Activated T-helper 1 cell treated with anti-CD3 and anti-CD28 coated beads, Interleukin-12 subunit alpha, Interleukin-12 subunit beta, Interleukin-2, Interleukin-4 antibody, amounts not matched to agents 30 ng/mL and 10 ng/mL and 1 ng/mL, durations not matched to agents 14 hours and 24 hours and 36 hours (primary cell): ENCODE measurements at regions of chr3 and their contacts with region 1.

Region 1: DNA sequence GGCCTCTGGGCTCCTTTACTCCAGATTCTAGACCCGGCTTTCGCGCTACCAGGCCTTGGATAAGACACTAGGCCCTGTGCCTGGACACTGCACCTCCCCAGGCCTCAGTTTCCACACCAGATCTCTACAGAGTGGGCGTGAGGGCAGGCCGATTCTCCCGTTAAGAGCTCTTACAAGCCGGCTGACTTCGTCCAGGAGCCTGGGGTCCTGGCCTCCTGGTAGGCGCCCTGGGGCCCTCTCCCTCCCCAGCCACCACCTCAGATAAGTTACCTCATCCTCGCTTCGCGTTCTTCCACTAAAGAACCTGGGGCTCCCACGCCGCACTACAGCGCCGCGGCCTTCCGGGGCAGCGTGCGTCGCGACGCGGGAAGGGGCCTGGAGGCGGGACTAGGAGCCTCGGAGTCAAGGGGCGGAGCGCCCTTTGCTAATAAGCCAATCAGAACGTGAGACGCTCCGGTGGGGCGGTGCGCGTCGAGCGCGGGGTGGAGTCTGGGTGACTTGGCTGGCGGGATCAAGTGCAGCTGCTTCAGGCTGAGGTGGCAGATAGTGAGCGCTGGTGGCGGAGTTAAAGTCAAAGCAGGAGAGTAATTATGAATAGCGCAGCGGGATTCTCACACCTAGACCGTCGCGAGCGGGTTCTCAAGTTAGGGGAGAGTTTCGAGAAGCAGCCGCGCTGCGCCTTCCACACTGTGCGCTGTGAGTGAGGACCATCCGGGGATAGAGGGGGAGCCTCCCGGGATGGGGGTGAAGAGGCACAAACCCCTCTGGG is at the starts of genes EAF2 and IQCB1:
- DNase-seq: peak; percentile 95
- H3K4me3 Mint-ChIP-seq: peak within 1 kb of the TSS; percentile 98
- H3K27ac Mint-ChIP-seq: peak within 1 kb of the TSS; percentile 97
- H3K4me1 Mint-ChIP-seq: peaks cover 60% of the 10 kb centered on the region
- H3K27me3 Mint-ChIP-seq: no peaks in the 10 kb centered on the region
- total RNA-seq, gene EAF2: 15.3 and 18.8 TPM in 2 replicates
- total RNA-seq, gene IQCB1: 45.2 and 50.4 TPM in 2 replicates

Region 2: GRCh38 chr3:121660356-121661171 is 174.3 kb before region 1 on chr3 and contains the start of gene HCLS1:
- intact Hi-C with region 1: loop called (anchors 1 kb)
- DNase-seq: peak; percentile 73
- H3K4me3 Mint-ChIP-seq: peak within 1 kb of the TSS; percentile 95
- H3K27ac Mint-ChIP-seq: peak within 1 kb of the TSS; percentile 99
- H3K4me1 Mint-ChIP-seq: peaks cover 57% of the 10 kb centered on the region
- H3K27me3 Mint-ChIP-seq: no peaks in the 10 kb centered on the region
- total RNA-seq, gene HCLS1: 234 and 235 TPM in 2 replicates

Region 3: GRCh38 chr3:121793078-121793477 is 41.8 kb before region 1 on chr3:
- intact Hi-C with region 1: no loop called
- DNase-seq: no peak
- H3K4me3 Mint-ChIP-seq: no peak overlapping the region
- H3K27ac Mint-ChIP-seq: no peak overlapping the region
- H3K4me1 Mint-ChIP-seq: no peaks in the 10 kb centered on the region
- H3K27me3 Mint-ChIP-seq: no peaks in the 10 kb centered on the region

Region 4: DNA sequence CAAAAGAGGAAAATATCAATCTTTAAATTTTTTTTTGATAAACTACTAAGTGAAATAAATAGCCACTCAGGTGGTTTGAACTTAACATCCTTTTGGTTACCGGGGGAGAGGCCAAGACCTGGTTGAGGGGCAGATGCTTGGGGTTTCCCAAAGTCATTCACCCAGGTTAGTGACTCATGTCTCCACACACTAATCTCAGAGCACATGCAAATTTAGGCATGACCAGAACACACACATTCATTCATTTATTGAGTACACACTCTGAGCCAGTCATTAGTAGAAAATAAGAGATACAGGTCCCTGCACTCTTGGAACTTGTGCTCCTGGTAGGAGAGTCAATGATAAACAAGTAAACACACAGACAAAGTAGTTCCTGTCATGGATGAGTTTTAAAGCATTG is 179.9 kb after region 1 on chr3:
- intact Hi-C with region 1: loop called (anchors 1 kb)
- DNase-seq: no peak
- H3K4me3 Mint-ChIP-seq: no peak overlapping the region
- H3K27ac Mint-ChIP-seq: peak overlapping the region; percentile 21
- H3K4me1 Mint-ChIP-seq: peaks cover 40% of the 10 kb centered on the region
- H3K27me3 Mint-ChIP-seq: peaks cover 12% of the 10 kb centered on the region

Region 5: GRCh38 chr3:122146466-122146865 is 311.6 kb after region 1 on chr3:
- intact Hi-C with region 1: loop called (anchors 1 kb)
- DNase-seq: peak; percentile 62
- H3K4me3 Mint-ChIP-seq: peak overlapping the region; percentile 0
- H3K27ac Mint-ChIP-seq: peak overlapping the region; percentile 69
- H3K4me1 Mint-ChIP-seq: peaks cover 23% of the 10 kb centered on the region
- H3K27me3 Mint-ChIP-seq: peaks cover 2% of the 10 kb centered on the region

Region 6: GRCh38 chr3:122415720-122416654 is 581.1 kb after region 1 on chr3 and contains the start of gene WDR5B:
- intact Hi-C with region 1: loop called (anchors 2 kb)
- DNase-seq: peak; percentile 96
- H3K4me3 Mint-ChIP-seq: peak within 1 kb of the TSS; percentile 98
- H3K27ac Mint-ChIP-seq: peak within 1 kb of the TSS; percentile 99
- H3K4me1 Mint-ChIP-seq: peaks cover 48% of the 10 kb centered on the region
- H3K27me3 Mint-ChIP-seq: no peaks in the 10 kb centered on the region
- total RNA-seq, gene WDR5B: 4.3 and 5.6 TPM in 2 replicates

Region 7: DNA sequence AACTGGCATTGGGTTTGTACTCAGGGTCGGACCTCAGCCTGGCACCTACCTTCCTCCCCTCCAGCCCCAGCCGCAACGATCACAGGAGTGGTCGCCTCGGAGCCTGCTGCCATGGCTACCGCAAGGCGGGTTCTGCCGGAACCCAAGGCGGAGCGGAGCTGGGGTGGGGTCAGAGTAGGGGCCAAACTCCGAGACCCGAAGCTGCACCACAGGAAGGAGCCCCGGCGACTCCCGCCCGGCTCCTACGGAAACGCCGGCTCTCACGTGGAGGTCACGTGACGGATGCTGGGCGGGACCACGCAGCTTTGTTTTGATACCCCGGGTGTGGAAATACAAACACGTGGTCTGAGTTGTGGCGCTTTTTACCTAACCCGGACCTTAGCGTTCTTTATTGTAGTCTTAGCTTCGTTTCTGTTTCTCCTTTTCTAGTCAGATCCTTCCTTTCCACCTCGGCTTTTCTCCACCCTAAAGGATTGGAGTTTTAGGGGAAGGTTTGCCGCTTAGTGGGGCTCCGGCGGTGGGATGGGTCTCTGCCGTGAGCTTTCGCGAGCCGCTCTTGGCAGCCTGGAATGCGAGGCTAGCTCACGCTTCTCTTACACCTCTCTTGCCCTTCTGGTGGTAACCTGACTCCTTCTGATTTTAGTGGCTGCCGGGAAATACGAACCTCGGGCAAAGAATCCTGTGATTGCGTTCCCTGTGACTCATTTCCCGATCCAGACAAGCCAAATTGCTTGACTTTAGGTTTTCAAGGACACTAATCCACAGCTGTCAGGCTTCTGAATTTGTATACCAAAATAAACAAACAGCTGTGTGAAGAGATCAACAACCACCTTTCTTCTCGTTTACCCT is 958.9 kb after region 1 on chr3 and contains the start of gene HSPBAP1:
- intact Hi-C with region 1: loop called (anchors 10 kb)
- DNase-seq: peak; percentile 86
- H3K4me3 Mint-ChIP-seq: peak within 1 kb of the TSS; percentile 89
- H3K27ac Mint-ChIP-seq: peak within 1 kb of the TSS; percentile 79
- H3K4me1 Mint-ChIP-seq: peaks cover 39% of the 10 kb centered on the region
- H3K27me3 Mint-ChIP-seq: no peaks in the 10 kb centered on the region
- total RNA-seq, gene HSPBAP1: 8.1 and 8.9 TPM in 2 replicates